B cell (primary cell): ENCODE measurements at regions of chr7 and their contacts with region 1.

Region 1: GRCh38 chr7:28165961-28166955 is 14.3 kb downstream of the JAZF1 start:
- DNase-seq: no peak
- ATAC-seq: no peak
- H3K4me3 ChIP-seq: peak overlapping the region in 1 of 5 experiments; percentile 38
- H3K4me3 Mint-ChIP-seq: no peak overlapping the region
- H3K27ac ChIP-seq: peak overlapping the region; percentile 56 to 59
- H3K27ac Mint-ChIP-seq: no peak overlapping the region
- H3K4me1 ChIP-seq: peaks cover 95% of the 10 kb centered on the region in 2 donors
- H3K4me1 Mint-ChIP-seq: peaks cover 93% of the 10 kb centered on the region
- H3K27me3 ChIP-seq: no peaks in the 10 kb centered on the region
- H3K27me3 Mint-ChIP-seq: no peaks in the 10 kb centered on the region
- CTCF ChIP-seq: no peak

Region 2: GRCh38 chr7:28155019-28155660 is 11.1 kb before region 1 on chr7:
- CTCF ChIA-PET with region 1: interaction called, 6 read pairs
- POLR2A ChIA-PET with region 1: no interaction called
- intact Hi-C with region 1: loop called (anchors 1 kb)
- DNase-seq: peak; percentile 79
- ATAC-seq: peak; percentile 78
- H3K4me3 ChIP-seq: peak overlapping the region in 4 of 5 experiments; percentile 23 to 58 (median 36)
- H3K4me3 Mint-ChIP-seq: peak overlapping the region; percentile 59
- H3K27ac ChIP-seq: peak overlapping the region; percentile 71 to 74
- H3K27ac Mint-ChIP-seq: peak overlapping the region; percentile 84
- H3K4me1 ChIP-seq: peaks cover 89 to 98% of the 10 kb centered on the region in 2 donors
- H3K4me1 Mint-ChIP-seq: peaks cover 88% of the 10 kb centered on the region
- H3K27me3 ChIP-seq: no peaks in the 10 kb centered on the region
- H3K27me3 Mint-ChIP-seq: no peaks in the 10 kb centered on the region
- CTCF ChIP-seq: no peak